ENCODE measurements at regions of chr1 and their contacts with region 1.

Region 1: DNA sequence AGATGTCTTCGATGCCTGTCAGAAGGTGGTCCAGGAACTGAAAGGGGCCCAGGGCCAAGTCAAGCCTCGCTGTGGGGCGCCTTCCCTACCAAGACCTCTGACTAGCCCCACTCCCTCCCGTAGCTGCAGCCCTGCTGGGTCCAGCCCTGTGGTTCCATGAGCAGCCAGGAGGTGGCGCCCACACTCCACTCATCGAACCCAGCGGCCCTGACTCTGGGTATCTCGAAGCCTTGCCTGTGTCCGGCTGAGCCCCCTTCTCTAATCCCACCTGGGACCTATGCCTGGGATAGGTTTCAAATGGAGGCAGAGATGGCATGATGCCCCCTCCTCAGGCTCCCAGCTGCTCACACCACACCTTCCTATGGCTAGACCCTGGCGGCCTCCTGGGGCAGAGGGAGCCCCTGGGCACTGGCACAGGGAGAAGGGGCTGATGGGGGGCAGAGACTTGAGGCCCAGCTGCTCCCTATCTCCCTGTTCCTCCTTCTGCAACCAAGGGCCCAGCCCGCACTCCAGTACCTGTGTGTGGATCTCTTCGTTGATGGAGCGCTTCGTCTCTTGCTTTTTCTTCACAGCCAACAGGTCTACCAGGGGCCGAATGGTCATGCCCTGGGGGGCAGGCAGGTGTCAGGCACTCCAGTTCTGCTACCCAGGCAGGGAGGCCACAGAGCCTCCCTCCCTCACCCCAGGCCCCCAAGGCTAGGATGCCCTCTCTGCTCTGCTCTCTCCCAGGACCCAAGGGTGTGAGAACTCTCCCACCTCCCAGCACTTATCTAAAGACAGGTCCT is 52.0 kb downstream of the SLC9A1 start:
- DNase-seq: peak; percentile 70 to 93 (median 91)
- ATAC-seq: peak; percentile 26 to 38
- H3K4me3 ChIP-seq: no peak overlapping the region
- H3K27ac ChIP-seq: no peak overlapping the region
- H3K4me1 ChIP-seq: peaks cover 11% of the 10 kb centered on the region
- H3K27me3 ChIP-seq: no peaks in the 10 kb centered on the region

Region 2: GRCh38 chr1:26907071-26907917 is 195.6 kb before region 1 on chr1:
- intact Hi-C with region 1: no loop called
- DNase-seq: no peak
- ATAC-seq: no peak
- H3K4me3 ChIP-seq: no peak overlapping the region
- H3K27ac ChIP-seq: no peak overlapping the region
- H3K4me1 ChIP-seq: no peaks in the 10 kb centered on the region
- H3K27me3 ChIP-seq: no peaks in the 10 kb centered on the region

Region 3: DNA sequence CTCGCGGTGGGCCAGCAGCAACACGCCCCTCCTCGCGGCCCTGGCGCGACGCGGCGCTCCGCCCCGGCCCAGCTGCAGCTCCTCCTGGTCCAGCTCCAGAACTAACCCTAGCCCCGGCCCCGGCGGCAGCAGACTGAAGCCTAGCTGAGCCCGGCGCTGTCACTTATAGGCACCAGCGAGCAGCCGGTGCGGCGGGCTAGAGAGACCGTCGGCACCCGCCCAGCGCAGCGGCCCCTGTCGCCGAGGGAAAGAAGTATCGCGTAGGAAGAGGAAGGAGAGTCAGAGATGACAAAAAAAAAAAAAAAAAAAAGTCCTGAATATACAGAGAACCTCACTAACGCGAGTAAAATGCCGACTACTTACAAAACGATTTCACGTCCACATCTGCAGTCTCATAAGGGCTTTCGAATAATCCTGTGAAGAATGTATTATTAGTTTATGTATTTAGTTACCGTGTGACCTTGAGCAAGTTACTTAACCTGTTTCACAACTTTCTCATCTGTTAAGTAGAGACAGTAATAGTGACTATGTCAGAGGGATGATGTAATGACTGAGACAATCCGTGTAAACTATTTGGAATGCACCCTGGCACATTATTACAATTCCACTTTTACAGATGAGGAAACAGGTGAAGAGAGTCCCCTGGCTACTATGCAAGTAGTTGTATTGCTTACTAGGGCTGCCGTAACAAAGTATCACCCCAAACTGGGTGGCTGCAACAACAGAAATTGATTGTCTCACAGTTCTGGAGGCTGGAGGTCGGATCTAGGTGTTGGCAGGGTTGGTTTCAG is 52.3 kb after region 1 on chr1 and contains the start of gene SLC9A1:
- intact Hi-C with region 1: loop called in 1 of 4 experiments (anchors 5 kb)
- DNase-seq: peak; percentile 95 to 98 (median 98)
- ATAC-seq: peak; percentile 91
- H3K4me3 ChIP-seq: peak within 1 kb of the TSS; percentile 97
- H3K27ac ChIP-seq: peak within 1 kb of the TSS; percentile 97
- H3K4me1 ChIP-seq: peaks cover 9% of the 10 kb centered on the region
- H3K27me3 ChIP-seq: no peaks in the 10 kb centered on the region
- total RNA-seq, gene SLC9A1: 22.8 to 39.3 (median 35.4) TPM

Region 4: GRCh38 chr1:27192039-27192529 is 89.2 kb after region 1 on chr1:
- intact Hi-C with region 1: loop called in 1 of 4 experiments (anchors 10 kb)
- DNase-seq: no peak
- ATAC-seq: peak; percentile 41 to 55
- H3K4me3 ChIP-seq: no peak overlapping the region
- H3K27ac ChIP-seq: no peak overlapping the region
- H3K4me1 ChIP-seq: no peaks in the 10 kb centered on the region
- H3K27me3 ChIP-seq: no peaks in the 10 kb centered on the region

Region 5: DNA sequence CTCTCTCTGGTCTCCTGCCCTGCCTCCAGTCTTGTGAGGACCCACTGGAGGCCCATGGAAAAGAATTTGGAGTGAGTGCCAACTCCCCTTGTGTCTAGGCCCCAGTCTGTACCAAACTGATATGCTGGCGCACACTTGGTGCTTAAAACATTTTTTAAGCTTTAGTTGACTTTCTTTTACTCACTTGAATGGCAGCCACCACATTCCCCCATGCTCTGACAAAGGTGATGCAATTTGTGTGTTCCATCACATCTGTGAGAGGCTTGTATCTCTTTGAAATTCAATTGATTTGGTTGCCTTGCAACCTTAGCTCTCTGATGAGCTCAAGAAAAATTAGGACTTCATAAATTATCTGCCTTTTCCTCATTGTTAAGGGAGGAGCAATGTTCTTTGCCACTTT is 101.0 kb after region 1 on chr1:
- intact Hi-C with region 1: loop called in 2 of 4 experiments (anchors 2 to 10 kb)
- DNase-seq: no peak
- ATAC-seq: no peak
- H3K4me3 ChIP-seq: no peak overlapping the region
- H3K27ac ChIP-seq: no peak overlapping the region
- H3K4me1 ChIP-seq: no peaks in the 10 kb centered on the region
- H3K27me3 ChIP-seq: no peaks in the 10 kb centered on the region

Region 6: DNA sequence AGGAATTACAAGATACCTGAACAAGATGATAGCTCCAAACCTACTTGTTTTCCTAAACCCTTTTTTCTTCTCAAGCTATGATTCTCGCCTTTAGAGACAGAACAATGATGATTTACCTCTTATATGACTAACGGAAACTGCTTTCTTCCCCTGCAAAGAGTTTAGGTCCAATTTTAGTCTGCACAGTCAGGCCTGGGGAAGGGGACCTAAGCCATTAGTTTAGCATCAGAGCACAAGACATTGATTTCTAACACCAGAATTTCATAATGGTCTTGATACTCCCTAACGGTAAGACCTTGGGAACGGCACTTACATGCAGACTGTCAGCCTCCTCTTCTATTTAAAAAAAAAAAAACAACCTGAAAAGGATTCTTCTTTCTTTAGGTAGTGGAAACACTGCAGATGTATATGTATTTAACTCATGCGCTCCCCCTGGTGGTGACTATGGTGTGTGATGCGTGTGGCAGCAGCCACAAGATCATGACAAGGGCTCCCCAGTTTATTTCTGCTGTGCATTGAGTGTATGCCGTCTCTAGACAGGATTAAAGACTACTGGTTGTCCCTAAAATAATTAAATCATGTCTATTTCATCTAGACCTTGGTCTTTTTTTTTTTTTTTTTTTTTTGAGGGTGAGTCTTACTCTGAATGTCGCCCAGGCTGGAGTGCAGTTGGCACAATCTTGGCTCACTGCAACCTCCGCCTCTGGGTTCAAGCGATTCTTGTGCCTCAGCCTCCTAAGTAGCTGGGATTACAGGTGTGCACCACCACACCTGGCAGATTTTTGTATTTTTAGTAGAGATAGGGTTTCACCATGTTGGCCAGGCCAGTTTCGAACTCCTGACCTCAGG is 181.8 kb after region 1 on chr1:
- intact Hi-C with region 1: loop called (anchors 2 to 5 kb)
- DNase-seq: peak; percentile 85 to 96 (median 89)
- ATAC-seq: peak; percentile 75 to 90
- H3K4me3 ChIP-seq: no peak overlapping the region
- H3K27ac ChIP-seq: no peak overlapping the region
- H3K4me1 ChIP-seq: no peaks in the 10 kb centered on the region
- H3K27me3 ChIP-seq: no peaks in the 10 kb centered on the region